Ascending aorta (tissue), 2 donors: ENCODE measurements at regions of chr19 and their contacts with region 1.

Region 1: GRCh38 chr19:12551060-12551832 is at the start of gene ZNF564:
- DNase-seq: peak; percentile 93 to 98
- H3K4me3 ChIP-seq: peak within 1 kb of the TSS; percentile 86 to 96
- H3K27ac ChIP-seq: peak within 1 kb of the TSS; percentile 85 to 96
- H3K4me1 ChIP-seq: peaks cover 0 to 18% of the 10 kb centered on the region in 2 donors
- H3K27me3 ChIP-seq: no peaks in the 10 kb centered on the region
- CTCF ChIP-seq: no peak
- total RNA-seq, gene ZNF564: 2.6 TPM

Region 2: GRCh38 chr19:12400633-12401502 is 150.4 kb before region 1 on chr19 and contains the start of gene ZNF799:
- intact Hi-C with region 1: loop called (anchors 1 kb)
- DNase-seq: peak; percentile 95 to 99
- H3K4me3 ChIP-seq: peak within 1 kb of the TSS; percentile 77 to 95
- H3K27ac ChIP-seq: peak within 1 kb of the TSS; percentile 74 to 80
- H3K4me1 ChIP-seq: peaks cover 3 to 4% of the 10 kb centered on the region in 2 donors
- H3K27me3 ChIP-seq: no peaks in the 10 kb centered on the region
- CTCF ChIP-seq: no peak
- total RNA-seq, gene ZNF799: 3.1 TPM

Region 3: GRCh38 chr19:12440541-12441316 is 110.5 kb before region 1 on chr19 and contains the start of gene ZNF443:
- intact Hi-C with region 1: loop called (anchors 2 kb)
- DNase-seq: peak; percentile 99
- H3K4me3 ChIP-seq: peak within 1 kb of the TSS; percentile 77 to 81
- H3K27ac ChIP-seq: peak within 1 kb of the TSS; percentile 80 to 81
- H3K4me1 ChIP-seq: no peaks in the 10 kb centered on the region
- H3K27me3 ChIP-seq: no peaks in the 10 kb centered on the region
- CTCF ChIP-seq: peak in 1 of 3 experiments; percentile 17
- total RNA-seq, gene ZNF443: 4.0 TPM

Region 4: DNA sequence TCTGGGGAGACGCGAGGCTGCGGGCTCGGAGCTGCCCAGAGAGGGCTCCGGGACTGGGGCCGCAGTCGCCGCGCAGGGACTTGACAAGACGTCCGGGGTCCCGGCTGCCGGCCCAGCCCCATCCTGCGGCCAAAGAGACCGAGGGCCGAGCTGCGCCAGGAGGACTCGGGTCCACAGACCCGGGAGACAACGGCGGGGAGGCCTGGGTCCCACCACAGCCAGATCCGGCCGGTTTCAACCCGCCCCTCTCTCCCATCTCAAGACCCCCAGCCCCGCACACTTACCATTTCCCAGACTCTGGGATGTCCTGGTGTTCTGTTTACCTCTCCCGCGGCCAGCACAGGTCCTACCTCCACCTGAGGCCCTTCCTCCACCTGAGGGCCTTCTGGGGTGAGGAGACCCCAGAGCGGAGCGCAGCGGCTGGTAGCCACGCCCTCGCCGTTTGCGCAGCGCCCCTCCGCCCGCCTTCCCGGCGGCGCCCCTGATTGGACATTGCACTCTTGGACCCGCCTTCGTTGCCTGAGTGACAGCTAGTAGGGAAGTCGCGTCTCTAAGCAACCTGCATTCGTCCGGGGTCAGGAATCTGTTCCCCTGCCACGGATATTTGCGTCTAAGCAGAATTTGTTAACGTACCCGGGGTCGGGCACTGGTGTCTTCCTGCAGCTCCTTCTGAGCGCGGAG is 66.7 kb before region 1 on chr19 and contains the start of gene ZNF709:
- intact Hi-C with region 1: loop called (anchors 1 kb)
- DNase-seq: peak; percentile 63 to 94
- H3K4me3 ChIP-seq: peak within 1 kb of the TSS; percentile 86 to 98
- H3K27ac ChIP-seq: peak within 1 kb of the TSS; percentile 74 to 76
- H3K4me1 ChIP-seq: peaks cover 0 to 15% of the 10 kb centered on the region in 2 donors
- H3K27me3 ChIP-seq: no peaks in the 10 kb centered on the region
- CTCF ChIP-seq: no peak
- total RNA-seq, gene ZNF709: 3.4 TPM

Region 5: GRCh38 chr19:12574036-12574435 is 22.8 kb after region 1 on chr19:
- intact Hi-C with region 1: no loop called
- DNase-seq: no peak
- H3K4me3 ChIP-seq: no peak overlapping the region
- H3K27ac ChIP-seq: no peak overlapping the region
- H3K4me1 ChIP-seq: no peaks in the 10 kb centered on the region
- H3K27me3 ChIP-seq: no peaks in the 10 kb centered on the region
- CTCF ChIP-seq: no peak

Region 6: GRCh38 chr19:12610540-12611360 is 59.5 kb after region 1 on chr19 and contains the starts of genes ZNF490 and ZNF791:
- intact Hi-C with region 1: loop called (anchors 1 kb)
- DNase-seq: peak; percentile 95 to 99
- H3K4me3 ChIP-seq: peak within 1 kb of the TSS; percentile 74 to 81
- H3K27ac ChIP-seq: peak within 1 kb of the TSS; percentile 96 to 100
- H3K4me1 ChIP-seq: peaks cover 0 to 28% of the 10 kb centered on the region in 2 donors
- H3K27me3 ChIP-seq: no peaks in the 10 kb centered on the region
- CTCF ChIP-seq: no peak
- total RNA-seq, gene ZNF490: 27.8 TPM
- total RNA-seq, gene ZNF791: 6.9 TPM